ENCODE measurements at regions of chr11 and their contacts with region 1.

Region 1: DNA sequence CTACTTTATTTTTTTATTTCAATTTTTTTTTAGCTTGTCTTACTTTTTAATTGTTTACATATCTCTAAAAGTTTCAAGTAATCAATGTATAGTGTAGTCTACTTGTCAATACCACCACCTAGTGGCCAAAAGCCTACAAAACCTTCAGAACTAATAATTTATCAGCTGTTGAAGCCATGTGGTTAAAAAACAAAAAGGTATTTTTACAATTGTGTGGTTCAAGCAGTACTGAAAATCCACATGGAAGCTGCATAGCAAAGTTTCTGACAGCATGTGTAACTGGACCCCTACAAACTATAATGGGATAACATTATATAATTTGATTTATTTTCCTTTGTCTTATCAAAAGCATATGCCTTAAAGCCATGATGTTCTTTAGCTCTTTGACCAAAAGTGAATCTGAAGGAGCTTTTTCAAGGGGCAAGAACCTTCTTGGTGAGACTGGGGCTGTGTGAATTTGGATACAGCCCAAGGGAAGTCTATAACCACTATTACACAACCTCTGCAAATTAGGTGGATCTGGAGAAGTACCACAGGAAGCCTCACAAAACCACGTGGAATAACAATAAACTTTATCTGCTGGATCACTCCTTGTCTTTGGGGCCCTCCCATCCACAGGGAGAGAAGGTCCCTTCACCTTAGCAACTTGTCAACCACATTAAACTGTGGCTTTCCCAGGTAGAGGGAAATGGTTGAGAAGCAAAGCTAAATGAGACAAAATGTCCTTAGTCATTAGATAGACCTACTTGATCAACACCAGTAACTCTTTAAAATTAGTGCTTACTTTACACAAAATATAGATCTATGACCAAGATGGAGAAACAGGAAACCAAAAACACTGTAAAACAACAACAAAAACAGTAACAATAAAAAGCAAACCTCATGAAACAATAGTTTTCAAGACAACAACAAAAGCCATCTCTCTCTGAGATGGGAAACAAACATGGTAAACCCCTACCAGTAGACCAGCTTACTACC is 9.9 kb downstream of the NARS2 start:
- DNase-seq: no peak
- ATAC-seq: peak; percentile 55 to 58

Region 2: DNA sequence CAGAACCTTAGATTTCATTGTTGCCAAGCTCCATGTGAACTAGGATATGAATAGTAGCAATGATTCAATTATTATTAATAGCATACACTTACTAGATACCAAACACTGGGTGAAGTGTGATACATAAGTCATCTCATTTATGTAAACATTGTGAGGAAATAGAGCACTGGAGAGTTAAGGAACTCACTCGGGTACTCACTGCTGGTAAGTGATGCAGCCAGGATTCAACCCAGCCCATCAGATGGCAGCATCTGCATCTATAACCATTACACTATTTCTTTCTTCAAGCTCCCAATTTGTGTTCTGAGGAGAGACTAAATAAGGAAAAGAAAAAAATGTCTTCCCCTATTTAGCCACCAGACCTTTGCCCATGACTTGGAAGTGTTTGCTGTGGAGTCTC is 415.1 kb before region 1 on chr11:
- intact Hi-C with region 1: loop called in 1 of 2 experiments (anchors 5 kb)
- DNase-seq: no peak
- ATAC-seq: peak; percentile 65 to 80

Region 3: GRCh38 chr11:78228467-78228866 is 336.3 kb before region 1 on chr11:
- intact Hi-C with region 1: loop called (anchors 2 to 5 kb)
- DNase-seq: no peak
- ATAC-seq: peak; percentile 50 to 60

Region 4: GRCh38 chr11:78615719-78616118 is 50.9 kb after region 1 on chr11:
- intact Hi-C with region 1: no loop called
- DNase-seq: no peak
- ATAC-seq: no peak

Measured in left cardiac atrium (tissue), 4 donors.